ENCODE measurements at regions of chr1 and their contacts with region 1.

Region 1: DNA sequence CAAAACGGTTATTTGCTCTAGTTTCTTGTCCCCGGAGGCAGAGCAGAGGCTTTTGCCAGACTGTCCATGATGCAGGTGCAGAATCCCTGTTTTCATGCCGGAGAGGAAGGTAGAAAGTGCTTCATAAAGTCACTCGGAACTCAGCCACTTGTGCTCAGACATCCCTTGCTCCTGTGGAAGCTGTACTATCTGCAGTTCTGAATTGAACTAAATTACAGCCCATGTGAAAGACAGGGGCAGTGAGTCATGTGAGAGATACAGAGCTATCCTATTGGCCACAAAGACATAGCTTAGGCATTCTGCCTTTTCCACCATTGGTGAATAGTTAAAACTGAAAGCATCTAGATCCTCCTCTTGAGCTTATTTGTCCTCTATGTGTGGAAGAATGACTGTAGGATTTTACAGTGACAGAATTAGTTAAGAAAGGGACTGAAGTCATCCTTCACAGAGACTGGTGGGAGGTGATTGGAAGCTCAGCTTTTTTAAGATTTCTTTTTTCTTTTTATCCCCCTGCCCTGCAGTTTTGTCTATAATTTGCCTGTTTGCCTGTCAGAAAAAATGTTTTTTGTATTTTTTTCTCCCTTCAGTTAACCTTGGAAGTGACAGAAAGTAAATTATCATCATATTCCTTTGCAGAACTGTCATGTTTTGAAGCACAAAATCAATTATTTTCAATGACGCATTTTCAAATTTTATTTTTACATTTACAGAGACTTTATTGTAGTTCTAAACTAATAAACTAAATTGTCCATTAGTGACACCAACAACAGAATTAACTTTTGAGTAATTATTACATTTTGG is 298.6 kb downstream of the PTPRC start:
- DNase-seq: peak; percentile 66
- H3K4me3 Mint-ChIP-seq: no peak overlapping the region
- H3K27ac Mint-ChIP-seq: peak overlapping the region; percentile 93
- H3K4me1 Mint-ChIP-seq: peaks cover 30% of the 10 kb centered on the region
- H3K27me3 Mint-ChIP-seq: no peaks in the 10 kb centered on the region

Region 2: DNA sequence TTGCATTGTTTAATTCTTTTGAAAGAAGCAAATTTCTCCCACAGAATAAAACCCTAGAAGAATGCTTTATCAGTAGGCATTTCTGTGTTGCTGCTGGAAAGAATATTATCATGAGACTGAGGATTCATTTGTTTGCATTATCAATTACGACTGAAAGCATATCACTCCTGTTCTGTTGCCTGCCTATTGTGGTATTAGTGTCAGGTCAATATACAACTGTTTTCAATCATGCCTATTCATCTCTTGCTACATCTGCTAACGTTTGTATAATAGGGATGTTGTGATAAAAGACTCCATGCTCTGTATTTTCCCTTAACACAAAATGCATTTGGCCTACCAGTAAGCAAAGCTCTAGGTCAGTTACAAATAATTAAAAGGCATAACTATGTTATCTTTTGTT is 77.1 kb before region 1 on chr1:
- intact Hi-C with region 1: no loop called
- DNase-seq: no peak
- H3K4me3 Mint-ChIP-seq: no peak overlapping the region
- H3K27ac Mint-ChIP-seq: no peak overlapping the region
- H3K4me1 Mint-ChIP-seq: peaks cover 12% of the 10 kb centered on the region
- H3K27me3 Mint-ChIP-seq: no peaks in the 10 kb centered on the region

Region 3: GRCh38 chr1:198880818-198881597 is 56.4 kb before region 1 on chr1:
- intact Hi-C with region 1: loop called (anchors 5 kb)
- DNase-seq: no peak
- H3K4me3 Mint-ChIP-seq: no peak overlapping the region
- H3K27ac Mint-ChIP-seq: peak overlapping the region; percentile 49
- H3K4me1 Mint-ChIP-seq: peaks cover 42% of the 10 kb centered on the region
- H3K27me3 Mint-ChIP-seq: no peaks in the 10 kb centered on the region

Region 4: DNA sequence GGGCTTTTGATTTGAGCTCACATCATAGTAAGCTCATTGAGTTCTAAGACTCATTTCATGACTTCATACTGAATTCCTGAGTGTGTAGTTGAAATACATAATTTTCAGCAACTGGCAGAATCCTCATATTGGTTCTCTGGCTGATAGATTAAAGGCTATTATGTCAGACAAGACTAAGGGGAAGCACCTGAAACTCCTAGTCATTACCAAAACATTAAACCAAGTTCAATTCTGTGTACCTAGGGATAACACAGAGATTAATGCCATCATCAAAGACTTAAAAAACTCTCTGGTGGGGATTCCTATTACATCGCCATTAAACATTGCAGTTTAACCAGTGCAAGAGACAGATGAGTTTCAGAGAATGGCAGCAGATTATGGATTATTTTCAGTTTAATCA is 40.5 kb after region 1 on chr1:
- intact Hi-C with region 1: loop called (anchors 5 kb)
- DNase-seq: no peak
- H3K4me3 Mint-ChIP-seq: no peak overlapping the region
- H3K27ac Mint-ChIP-seq: no peak overlapping the region
- H3K4me1 Mint-ChIP-seq: peaks cover 26% of the 10 kb centered on the region
- H3K27me3 Mint-ChIP-seq: no peaks in the 10 kb centered on the region

Region 5: GRCh38 chr1:199029855-199030254 is 92.4 kb after region 1 on chr1:
- intact Hi-C with region 1: loop called (anchors 5 kb)
- DNase-seq: no peak
- H3K4me3 Mint-ChIP-seq: no peak overlapping the region
- H3K27ac Mint-ChIP-seq: peak overlapping the region; percentile 73
- H3K4me1 Mint-ChIP-seq: peaks cover 56% of the 10 kb centered on the region
- H3K27me3 Mint-ChIP-seq: peaks cover 2% of the 10 kb centered on the region

Region 6: DNA sequence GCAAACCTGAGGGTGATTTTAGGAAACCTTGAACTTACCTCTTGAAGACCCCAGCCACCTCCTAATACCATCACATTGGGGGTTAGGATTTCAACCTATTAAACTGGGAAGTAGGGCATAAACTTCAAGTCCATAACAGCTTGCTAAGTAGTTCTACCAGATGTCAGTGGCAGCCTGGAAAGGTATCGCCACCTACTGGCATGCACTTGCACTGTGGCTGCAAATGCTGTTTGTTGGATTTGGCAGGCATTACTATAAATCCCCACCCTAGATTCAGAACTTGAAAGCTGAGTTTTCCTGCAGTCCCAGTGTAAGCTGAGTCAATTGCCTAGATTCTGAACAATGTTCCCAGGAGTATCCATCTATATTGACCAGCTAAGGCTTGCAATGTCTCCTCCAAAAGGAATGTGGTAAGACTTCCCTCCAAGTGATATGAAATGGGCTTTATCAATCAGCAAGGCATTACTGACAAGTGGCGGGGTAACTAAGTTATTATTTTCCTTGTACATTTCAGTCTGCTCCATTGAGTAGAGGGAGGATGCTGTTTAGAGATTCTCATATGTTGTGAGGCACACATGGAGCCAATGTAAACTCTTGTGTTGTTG is 175.9 kb after region 1 on chr1:
- intact Hi-C with region 1: loop called (anchors 5 kb)
- DNase-seq: peak; percentile 49
- H3K4me3 Mint-ChIP-seq: no peak overlapping the region
- H3K27ac Mint-ChIP-seq: no peak overlapping the region
- H3K4me1 Mint-ChIP-seq: peaks cover 11% of the 10 kb centered on the region
- H3K27me3 Mint-ChIP-seq: no peaks in the 10 kb centered on the region

Region 7: DNA sequence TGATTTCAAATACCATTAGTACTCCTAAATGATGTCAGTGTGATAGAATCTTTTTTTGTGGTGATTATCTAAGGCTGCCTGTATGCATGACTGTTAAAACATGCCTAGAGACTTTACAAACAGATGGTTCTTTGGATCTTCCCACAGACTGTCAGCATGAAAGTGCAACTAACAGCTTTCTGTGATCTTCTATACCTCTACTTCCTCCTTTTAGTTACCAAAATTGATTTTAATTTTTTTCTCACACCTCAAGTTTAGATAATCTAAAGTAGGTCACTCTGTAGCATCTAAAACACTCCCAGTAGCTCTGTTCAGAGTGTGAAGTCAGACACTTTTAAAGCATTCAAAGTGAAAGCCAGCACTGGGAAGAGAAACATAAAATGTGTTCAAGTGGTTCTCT is 235.9 kb after region 1 on chr1:
- intact Hi-C with region 1: loop called (anchors 1 kb)
- DNase-seq: no peak
- H3K4me3 Mint-ChIP-seq: no peak overlapping the region
- H3K27ac Mint-ChIP-seq: peak overlapping the region; percentile 24
- H3K4me1 Mint-ChIP-seq: peaks cover 39% of the 10 kb centered on the region
- H3K27me3 Mint-ChIP-seq: peaks cover 36% of the 10 kb centered on the region

Region 8: GRCh38 chr1:199243423-199244061 is 306.1 kb after region 1 on chr1:
- intact Hi-C with region 1: loop called (anchors 1 kb)
- DNase-seq: peak; percentile 67
- H3K4me3 Mint-ChIP-seq: no peak overlapping the region
- H3K27ac Mint-ChIP-seq: no peak overlapping the region
- H3K4me1 Mint-ChIP-seq: peaks cover 9% of the 10 kb centered on the region
- H3K27me3 Mint-ChIP-seq: peaks cover 36% of the 10 kb centered on the region

Measured in activated T-helper 2 cell treated with anti-CD3 and anti-CD28 coated beads, Interferon-gamma antibody, Interleukin-2, Interleukin-4, amounts not matched to agents 10 μg/mL and 5 μg/mL and 100 μg/mL, durations not matched to agents 14 hours and 24 hours and 36 hours (primary cell).